Posterior cingulate gyrus (tissue), 11 donors: ENCODE measurements at regions of chr1 and their contacts with region 1.

Region 1: DNA sequence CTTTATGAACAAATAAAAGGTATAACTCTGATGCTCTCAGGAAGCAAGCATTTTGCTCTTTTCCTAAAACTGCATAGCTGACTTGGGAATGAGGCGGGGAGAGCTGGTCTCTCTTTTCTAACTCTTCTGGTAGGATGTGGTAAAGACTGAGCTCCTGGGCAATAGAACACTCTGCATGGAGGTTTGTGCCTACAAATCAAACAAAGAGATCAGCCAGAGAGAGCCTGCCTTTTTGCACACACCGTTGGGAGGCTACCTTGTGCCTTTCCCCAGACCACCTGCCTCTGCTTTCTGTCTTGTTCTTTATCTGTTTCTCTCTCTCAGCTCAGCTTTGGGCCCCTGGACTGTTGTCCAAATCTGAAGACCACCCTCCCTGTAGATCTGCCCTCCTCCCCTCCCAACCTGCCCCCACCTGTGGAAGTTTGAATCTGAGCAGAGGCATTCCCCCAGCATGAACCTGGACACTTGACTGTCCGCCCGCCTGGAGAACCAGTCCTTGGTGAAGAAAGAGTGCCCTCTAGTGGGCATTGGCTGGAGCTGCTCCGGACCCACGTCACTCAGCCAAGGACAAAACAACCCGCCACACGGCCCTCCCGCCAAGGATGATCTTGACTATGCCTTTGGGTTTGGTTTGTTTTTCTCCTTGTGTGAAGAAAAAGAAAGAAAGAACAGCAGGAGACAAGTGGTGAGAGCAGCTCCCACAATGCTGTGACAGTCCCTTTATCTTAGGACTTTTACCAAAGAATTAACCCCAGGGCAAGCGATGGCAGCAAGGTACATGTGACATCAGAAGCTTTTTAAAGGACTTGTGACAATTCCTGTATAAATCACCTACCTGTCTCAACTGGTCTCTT is 228.2 kb downstream of the PBX1 start:
- DNase-seq: peak; percentile 77 to 98 (median 88)

Region 2: DNA sequence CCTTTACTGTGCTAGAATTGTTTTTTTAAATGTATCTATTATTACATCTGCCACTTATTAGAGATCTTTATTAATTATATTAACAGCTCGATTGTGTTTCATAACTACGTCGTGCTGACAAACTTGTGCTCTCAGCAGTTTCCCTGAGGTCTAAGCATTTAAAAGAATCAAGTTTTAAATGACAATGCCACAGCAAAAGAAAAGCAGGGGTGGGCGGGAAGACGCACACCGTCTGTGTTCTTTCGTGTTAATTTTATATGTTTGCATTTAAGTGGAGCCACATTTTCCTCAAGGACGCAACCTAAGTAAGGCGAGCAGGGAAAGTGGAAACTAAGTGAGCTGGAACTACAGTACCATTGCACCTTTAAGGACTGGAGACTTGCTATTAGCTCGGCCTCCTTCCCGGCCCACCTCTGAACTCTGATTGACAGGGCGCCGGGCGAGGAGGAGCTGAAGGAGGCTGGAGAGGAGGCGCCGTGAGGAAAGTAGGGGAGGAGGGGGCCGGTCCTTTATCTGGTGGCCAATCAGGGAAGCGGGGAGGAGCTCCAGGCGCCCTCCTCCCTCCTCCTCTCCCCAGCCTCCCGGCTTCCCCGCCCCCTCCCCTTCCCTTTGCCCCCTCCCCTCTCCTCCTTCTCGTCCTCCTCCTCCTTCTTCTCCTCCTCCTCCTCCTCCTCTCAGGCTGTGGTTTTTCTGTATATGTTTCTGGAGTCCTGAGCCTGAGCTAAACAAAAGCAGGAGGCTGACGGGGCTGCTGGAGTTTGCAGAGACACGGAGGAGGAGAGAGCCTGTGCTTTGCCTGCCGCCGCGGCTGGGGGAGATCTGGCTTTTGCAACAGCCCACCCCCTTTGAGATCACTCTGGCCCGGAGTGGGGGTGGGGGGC is 228.5 kb before region 1 on chr1 and contains the start of gene PBX1:
- intact Hi-C with region 1: loop called (anchors 5 kb)
- DNase-seq: peak; percentile 90 to 100 (median 96)

Region 3: GRCh38 chr1:165696625-165697100 is 909.5 kb after region 1 on chr1:
- intact Hi-C with region 1: no loop called
- DNase-seq: peak in 1 of 10 donors; percentile 8